Panc1 (cell line): ENCODE measurements at regions of chr10 and their contacts with region 1.

Region 1: GRCh38 chr10:37488792-37489657 is 363.6 kb downstream of the ANKRD30A start:
- DNase-seq: peak; percentile 12
- ATAC-seq: peak; percentile 75; the same call in 1 of the 2 replicates
- H3K4me3 ChIP-seq: no peak overlapping the region
- H3K27ac ChIP-seq: no peak overlapping the region
- H3K4me1 ChIP-seq: no peaks in the 10 kb centered on the region
- H3K27me3 ChIP-seq: no peaks in the 10 kb centered on the region
- CTCF ChIP-seq: no peak

Region 2: DNA sequence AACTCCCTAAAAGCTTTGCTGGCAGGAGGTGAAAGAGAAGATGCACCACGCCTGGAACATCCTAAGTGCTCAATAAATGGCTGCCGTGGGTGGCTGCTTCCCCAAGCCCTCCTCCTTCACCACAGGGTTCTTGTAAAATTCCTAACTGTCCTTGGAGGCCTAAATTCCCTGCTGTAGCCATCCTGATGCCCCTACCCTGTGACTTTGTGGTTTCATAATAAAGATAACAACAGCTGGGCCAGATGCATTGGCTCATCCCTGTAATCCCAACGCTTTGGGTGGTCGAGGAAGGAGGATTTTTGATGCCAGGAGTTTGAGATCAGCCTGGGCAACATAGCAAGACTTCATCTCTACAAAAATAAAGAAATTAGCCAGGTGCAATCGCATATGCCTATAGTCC is 21.8 kb before region 1 on chr10:
- CTCF ChIA-PET with region 1: no interaction called
- POLR2A ChIA-PET with region 1: no interaction called
- in situ Hi-C with region 1: no loop called
- intact Hi-C with region 1: no loop called
- DNase-seq: no peak
- ATAC-seq: no peak
- H3K4me3 ChIP-seq: no peak overlapping the region
- H3K27ac ChIP-seq: no peak overlapping the region
- H3K4me1 ChIP-seq: no peaks in the 10 kb centered on the region
- H3K27me3 ChIP-seq: no peaks in the 10 kb centered on the region
- CTCF ChIP-seq: no peak

Region 3: GRCh38 chr10:37712489-37713131 is 223.6 kb after region 1 on chr10:
- CTCF ChIA-PET with region 1: interaction called, 11 read pairs
- POLR2A ChIA-PET with region 1: no interaction called
- in situ Hi-C with region 1: no loop called
- intact Hi-C with region 1: no loop called
- DNase-seq: no peak
- ATAC-seq: no peak
- H3K4me3 ChIP-seq: no peak overlapping the region
- H3K27ac ChIP-seq: no peak overlapping the region
- H3K4me1 ChIP-seq: no peaks in the 10 kb centered on the region
- H3K27me3 ChIP-seq: no peaks in the 10 kb centered on the region
- CTCF ChIP-seq: no peak